ENCODE measurements at regions of chr14 and their contacts with region 1.

Region 1: GRCh38 chr14:91350813-91351511 is 66.7 kb downstream of the CCDC88C start:
- DNase-seq: peak; percentile 73 to 89 (median 76)
- H3K4me3 ChIP-seq: peak overlapping the region; percentile 39 to 68
- H3K4me3 Mint-ChIP-seq: peak overlapping the region; percentile 83 to 94 (median 91)
- H3K27ac ChIP-seq: peak overlapping the region; percentile 88
- H3K27ac Mint-ChIP-seq: peak overlapping the region; percentile 93 to 99 (median 96)
- H3K4me1 ChIP-seq: peaks cover 91% of the 10 kb centered on the region
- H3K4me1 Mint-ChIP-seq: peaks cover 71 to 95% (median 87%) of the 10 kb centered on the region in 4 donors
- H3K27me3 ChIP-seq: no peaks in the 10 kb centered on the region
- H3K27me3 Mint-ChIP-seq: no peaks in the 10 kb centered on the region

Region 2: GRCh38 chr14:91323671-91324605 is 27.0 kb before region 1 on chr14:
- CTCF ChIA-PET with region 1: interaction called, 36 read pairs
- POLR2A ChIA-PET with region 1: interaction called, 55 read pairs
- intact Hi-C with region 1: loop called (anchors 1 kb)
- DNase-seq: peak; percentile 88 to 96 (median 91)
- H3K4me3 ChIP-seq: peak overlapping the region in 1 of 2 donors; percentile 32
- H3K4me3 Mint-ChIP-seq: peak overlapping the region; percentile 82 to 92 (median 84)
- H3K27ac ChIP-seq: peak overlapping the region; percentile 90
- H3K27ac Mint-ChIP-seq: peak overlapping the region; percentile 97 to 99 (median 99)
- H3K4me1 ChIP-seq: peaks cover 83% of the 10 kb centered on the region
- H3K4me1 Mint-ChIP-seq: peaks cover 35 to 85% (median 69%) of the 10 kb centered on the region in 4 donors
- H3K27me3 ChIP-seq: no peaks in the 10 kb centered on the region
- H3K27me3 Mint-ChIP-seq: no peaks in the 10 kb centered on the region

Region 3: DNA sequence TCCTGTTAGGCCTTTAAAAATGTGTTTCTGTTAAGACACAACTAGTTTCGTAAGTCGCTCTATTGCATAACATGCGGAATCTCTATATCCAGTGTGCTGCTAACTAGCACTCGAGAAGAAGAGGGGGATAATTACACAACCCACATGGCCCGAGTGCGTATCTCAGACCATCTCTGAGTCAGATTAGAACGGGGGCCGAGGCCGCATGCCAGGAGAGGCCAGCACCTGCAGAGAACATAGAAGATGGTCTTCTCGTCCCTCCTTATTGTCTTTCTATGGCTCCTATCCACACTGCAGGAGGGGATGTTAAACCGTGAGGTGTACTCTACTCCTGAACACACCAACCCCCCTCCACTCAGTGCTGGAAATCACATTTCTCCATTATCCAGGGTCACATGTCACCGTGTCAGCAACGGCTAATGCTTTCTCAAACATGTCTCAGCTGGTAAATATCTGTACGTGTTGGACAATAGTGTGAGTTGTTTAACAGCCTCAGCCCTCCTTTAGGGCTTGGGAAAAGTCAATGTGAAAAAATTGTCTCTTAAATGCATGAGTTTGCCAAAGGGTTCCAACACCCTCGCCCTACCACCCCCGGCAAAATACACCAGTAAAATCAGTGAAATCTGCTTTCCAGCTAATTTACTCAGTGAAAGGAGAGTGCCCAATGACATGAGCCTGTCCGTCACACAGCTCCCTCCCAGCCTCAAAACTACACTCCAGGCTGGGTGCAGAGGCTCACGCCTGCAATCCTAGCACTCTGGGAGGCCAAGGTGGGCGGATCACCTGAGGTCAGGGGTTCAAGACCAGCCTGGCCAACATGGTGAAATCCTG is 10.5 kb after region 1 on chr14:
- CTCF ChIA-PET with region 1: interaction called, 6 read pairs
- POLR2A ChIA-PET with region 1: interaction called, 21 read pairs
- intact Hi-C with region 1: no loop called
- DNase-seq: no peak
- H3K4me3 ChIP-seq: no peak overlapping the region
- H3K4me3 Mint-ChIP-seq: peak overlapping the region in 1 of 8 donors; percentile 54
- H3K27ac ChIP-seq: no peak overlapping the region
- H3K27ac Mint-ChIP-seq: peak overlapping the region in 6 of 7 donors; percentile 22 to 96 (median 42)
- H3K4me1 ChIP-seq: peaks cover 92% of the 10 kb centered on the region
- H3K4me1 Mint-ChIP-seq: peaks cover 39 to 91% (median 70%) of the 10 kb centered on the region in 4 donors
- H3K27me3 ChIP-seq: no peaks in the 10 kb centered on the region
- H3K27me3 Mint-ChIP-seq: no peaks in the 10 kb centered on the region

Region 4: GRCh38 chr14:91373591-91374254 is 22.8 kb after region 1 on chr14:
- CTCF ChIA-PET with region 1: interaction called, 17 read pairs
- POLR2A ChIA-PET with region 1: interaction called, 182 read pairs
- intact Hi-C with region 1: loop called (anchors 2 kb)
- DNase-seq: peak; percentile 54 to 89 (median 60)
- H3K4me3 ChIP-seq: peak overlapping the region; percentile 46 to 50
- H3K4me3 Mint-ChIP-seq: peak overlapping the region; percentile 78 to 94 (median 84)
- H3K27ac ChIP-seq: peak overlapping the region; percentile 79
- H3K27ac Mint-ChIP-seq: peak overlapping the region; percentile 93 to 98 (median 96)
- H3K4me1 ChIP-seq: peaks cover 99% of the 10 kb centered on the region
- H3K4me1 Mint-ChIP-seq: peaks cover 78 to 100% (median 90%) of the 10 kb centered on the region in 4 donors
- H3K27me3 ChIP-seq: no peaks in the 10 kb centered on the region
- H3K27me3 Mint-ChIP-seq: no peaks in the 10 kb centered on the region

Region 5: DNA sequence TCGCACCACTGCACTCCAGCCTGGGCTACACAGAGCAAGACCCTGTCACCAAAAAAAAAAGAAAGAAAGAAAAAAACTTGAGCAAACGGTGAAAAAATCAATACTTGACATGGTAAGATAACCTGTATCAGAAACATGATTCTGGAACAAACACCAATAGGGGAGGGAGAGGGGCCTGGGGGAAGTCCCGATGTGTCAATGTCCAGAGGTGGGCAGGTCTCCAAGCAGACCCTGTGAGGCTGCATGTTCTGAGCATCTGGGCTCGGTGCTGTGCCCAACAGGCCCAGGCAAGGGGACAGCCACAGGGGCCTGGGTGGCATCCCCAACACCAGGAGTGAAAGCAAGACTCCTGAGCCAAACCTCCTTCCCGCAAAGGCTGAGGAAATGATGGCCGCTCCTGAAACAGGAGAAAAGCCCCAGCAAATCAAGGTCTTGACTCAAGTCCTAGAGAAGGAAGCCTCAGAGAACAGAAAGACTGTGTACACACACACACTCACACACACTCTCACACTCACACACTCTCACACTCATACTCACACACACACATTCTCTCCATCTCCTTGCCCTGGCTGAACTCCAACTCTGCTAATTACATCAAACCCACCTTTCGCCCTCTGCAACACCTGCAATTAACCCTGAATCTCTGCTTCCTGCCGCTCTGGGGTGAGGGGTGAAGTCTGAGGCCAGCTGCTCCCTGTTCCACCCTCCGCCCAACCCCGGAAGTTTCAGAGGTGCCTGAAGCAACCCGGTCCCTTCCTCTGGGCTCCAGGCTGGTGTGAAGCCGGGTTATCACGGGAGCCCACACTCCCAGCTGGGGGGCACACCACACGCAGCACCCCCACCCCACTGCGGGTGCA is 46.2 kb after region 1 on chr14:
- CTCF ChIA-PET with region 1: interaction called, 34 read pairs
- POLR2A ChIA-PET with region 1: interaction called, 41 read pairs
- intact Hi-C with region 1: loop called (anchors 5 kb)
- DNase-seq: peak; percentile 64 to 85 (median 72)
- H3K4me3 ChIP-seq: peak overlapping the region; percentile 49 to 61
- H3K4me3 Mint-ChIP-seq: peak overlapping the region; percentile 79 to 99 (median 82)
- H3K27ac ChIP-seq: peak overlapping the region; percentile 65
- H3K27ac Mint-ChIP-seq: peak overlapping the region; percentile 90 to 98 (median 95)
- H3K4me1 ChIP-seq: peaks cover 97% of the 10 kb centered on the region
- H3K4me1 Mint-ChIP-seq: peaks cover 70 to 98% (median 84%) of the 10 kb centered on the region in 4 donors
- H3K27me3 ChIP-seq: no peaks in the 10 kb centered on the region
- H3K27me3 Mint-ChIP-seq: no peaks in the 10 kb centered on the region

Region 6: GRCh38 chr14:91409928-91410718 is 59.2 kb after region 1 on chr14:
- CTCF ChIA-PET with region 1: interaction called, 158 read pairs
- POLR2A ChIA-PET with region 1: interaction called, 111 read pairs
- intact Hi-C with region 1: no loop called
- DNase-seq: peak; percentile 53 to 88 (median 59)
- H3K4me3 ChIP-seq: no peak overlapping the region
- H3K4me3 Mint-ChIP-seq: peak overlapping the region; percentile 83 to 96 (median 87)
- H3K27ac ChIP-seq: peak overlapping the region; percentile 94
- H3K27ac Mint-ChIP-seq: peak overlapping the region; percentile 94 to 98 (median 97)
- H3K4me1 ChIP-seq: peaks cover 100% of the 10 kb centered on the region
- H3K4me1 Mint-ChIP-seq: peaks cover 73 to 95% (median 88%) of the 10 kb centered on the region in 4 donors
- H3K27me3 ChIP-seq: no peaks in the 10 kb centered on the region
- H3K27me3 Mint-ChIP-seq: no peaks in the 10 kb centered on the region

Region 7: GRCh38 chr14:92185559-92185958 is 834.6 kb after region 1 on chr14:
- CTCF ChIA-PET with region 1: no interaction called
- POLR2A ChIA-PET with region 1: no interaction called
- intact Hi-C with region 1: no loop called
- DNase-seq: no peak
- H3K4me3 ChIP-seq: no peak overlapping the region
- H3K4me3 Mint-ChIP-seq: no peak overlapping the region
- H3K27ac ChIP-seq: no peak overlapping the region
- H3K27ac Mint-ChIP-seq: no peak overlapping the region
- H3K4me1 ChIP-seq: no peaks in the 10 kb centered on the region
- H3K4me1 Mint-ChIP-seq: no peaks in the 10 kb centered on the region
- H3K27me3 ChIP-seq: no peaks in the 10 kb centered on the region
- H3K27me3 Mint-ChIP-seq: no peaks in the 10 kb centered on the region